Caco-2 (cell line): ENCODE measurements at regions of chr2 and their contacts with region 1.

Region 1: DNA sequence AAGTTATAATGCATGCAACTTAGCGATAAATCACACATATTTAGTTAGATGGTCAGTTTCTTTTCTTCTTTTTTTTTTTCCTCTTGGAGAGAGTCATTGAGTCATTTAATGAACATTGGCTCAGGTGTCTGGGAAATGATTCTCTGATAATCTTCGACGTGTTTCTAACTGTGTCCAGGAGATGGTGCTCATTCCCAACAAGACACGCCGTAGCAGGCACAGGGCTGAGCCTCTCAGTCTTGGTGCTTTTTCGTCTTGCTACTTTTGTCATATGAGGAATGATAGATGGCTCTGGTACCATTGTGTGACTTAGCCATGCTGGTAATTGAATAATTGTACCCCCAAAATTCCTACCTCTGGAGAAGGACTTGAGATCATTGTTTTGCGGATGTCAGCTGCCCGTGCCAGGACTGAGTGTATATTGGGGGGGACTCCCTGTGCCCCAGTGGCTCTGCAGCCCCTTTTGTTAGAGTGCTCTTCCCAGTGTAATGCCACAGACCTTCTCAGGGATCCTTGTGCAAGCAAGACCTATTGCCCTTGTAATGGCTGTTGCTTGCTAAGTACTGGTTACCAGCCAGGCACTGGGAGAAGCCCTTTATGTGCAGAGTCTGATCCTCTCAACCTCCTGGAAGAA is 107.6 kb upstream of the CYRIA start:
- DNase-seq: peak in 1 of 2 experiments; percentile 66
- H3K4me3 ChIP-seq: no peak overlapping the region
- H3K4me3 Mint-ChIP-seq: no peak overlapping the region
- H3K27ac Mint-ChIP-seq: no peak overlapping the region
- H3K4me1 ChIP-seq: no peaks in the 10 kb centered on the region
- H3K4me1 Mint-ChIP-seq: no peaks in the 10 kb centered on the region
- H3K27me3 ChIP-seq: no peaks in the 10 kb centered on the region; the same call in none of the 2 replicates
- H3K27me3 Mint-ChIP-seq: peaks cover 18% of the 10 kb centered on the region
- CTCF ChIP-seq: peak; percentile 64 to 81

Region 2: DNA sequence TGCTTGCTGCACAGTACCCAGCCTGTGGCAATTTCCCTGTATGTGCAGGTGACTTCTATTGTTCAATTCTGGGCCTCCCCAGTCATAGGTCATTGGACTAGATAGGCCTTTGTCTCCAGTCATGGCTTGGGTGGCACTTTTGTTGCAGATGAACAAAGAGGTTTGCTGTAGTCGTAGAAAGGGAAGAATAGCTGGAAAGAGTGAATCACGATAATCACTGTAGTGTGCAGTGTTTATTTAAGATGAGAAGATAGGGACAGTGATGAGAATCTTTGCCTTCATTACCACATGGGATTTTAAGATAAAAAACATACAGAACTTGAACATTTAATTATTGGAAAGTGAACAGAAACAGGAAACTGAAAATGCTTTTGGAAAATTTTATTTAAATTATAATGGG is 48.5 kb after region 1 on chr2:
- CTCF ChIA-PET with region 1: no interaction called
- POLR2A ChIA-PET with region 1: no interaction called
- intact Hi-C with region 1: no loop called
- DNase-seq: no peak
- H3K4me3 ChIP-seq: no peak overlapping the region
- H3K4me3 Mint-ChIP-seq: no peak overlapping the region
- H3K27ac Mint-ChIP-seq: no peak overlapping the region
- H3K4me1 ChIP-seq: peaks cover 11% of the 10 kb centered on the region; the same call in 1 of the 2 replicates
- H3K4me1 Mint-ChIP-seq: peaks cover 12% of the 10 kb centered on the region
- H3K27me3 ChIP-seq: no peaks in the 10 kb centered on the region
- H3K27me3 Mint-ChIP-seq: peaks cover 6% of the 10 kb centered on the region
- CTCF ChIP-seq: no peak

Region 3: GRCh38 chr2:16890081-16890480 is 116.9 kb after region 1 on chr2:
- CTCF ChIA-PET with region 1: interaction called, 5 read pairs
- POLR2A ChIA-PET with region 1: no interaction called
- intact Hi-C with region 1: loop called (anchors 1 kb)
- DNase-seq: peak; percentile 35 to 43
- H3K4me3 ChIP-seq: no peak overlapping the region
- H3K4me3 Mint-ChIP-seq: no peak overlapping the region
- H3K27ac Mint-ChIP-seq: no peak overlapping the region
- H3K4me1 ChIP-seq: no peaks in the 10 kb centered on the region
- H3K4me1 Mint-ChIP-seq: no peaks in the 10 kb centered on the region
- H3K27me3 ChIP-seq: no peaks in the 10 kb centered on the region
- H3K27me3 Mint-ChIP-seq: peaks cover 7% of the 10 kb centered on the region
- CTCF ChIP-seq: peak in 1 of 2 experiments; percentile 43

Region 4: GRCh38 chr2:16900405-16901025 is 127.3 kb after region 1 on chr2:
- CTCF ChIA-PET with region 1: interaction called, 3 read pairs
- POLR2A ChIA-PET with region 1: no interaction called
- intact Hi-C with region 1: loop called (anchors 1 kb)
- DNase-seq: peak; percentile 49 to 59
- H3K4me3 ChIP-seq: no peak overlapping the region
- H3K4me3 Mint-ChIP-seq: no peak overlapping the region
- H3K27ac Mint-ChIP-seq: no peak overlapping the region
- H3K4me1 ChIP-seq: no peaks in the 10 kb centered on the region
- H3K4me1 Mint-ChIP-seq: peaks cover 6% of the 10 kb centered on the region
- H3K27me3 ChIP-seq: no peaks in the 10 kb centered on the region
- H3K27me3 Mint-ChIP-seq: no peaks in the 10 kb centered on the region
- CTCF ChIP-seq: peak; percentile 87 to 98

Region 5: GRCh38 chr2:17148407-17149145 is 375.4 kb after region 1 on chr2:
- CTCF ChIA-PET with region 1: no interaction called
- POLR2A ChIA-PET with region 1: no interaction called
- intact Hi-C with region 1: loop called (anchors 1 kb)
- DNase-seq: peak; percentile 36 to 37
- H3K4me3 ChIP-seq: no peak overlapping the region
- H3K4me3 Mint-ChIP-seq: no peak overlapping the region
- H3K27ac Mint-ChIP-seq: no peak overlapping the region
- H3K4me1 ChIP-seq: no peaks in the 10 kb centered on the region
- H3K4me1 Mint-ChIP-seq: no peaks in the 10 kb centered on the region
- H3K27me3 ChIP-seq: no peaks in the 10 kb centered on the region
- H3K27me3 Mint-ChIP-seq: peaks cover 6% of the 10 kb centered on the region
- CTCF ChIP-seq: peak; percentile 43 to 56

Region 6: DNA sequence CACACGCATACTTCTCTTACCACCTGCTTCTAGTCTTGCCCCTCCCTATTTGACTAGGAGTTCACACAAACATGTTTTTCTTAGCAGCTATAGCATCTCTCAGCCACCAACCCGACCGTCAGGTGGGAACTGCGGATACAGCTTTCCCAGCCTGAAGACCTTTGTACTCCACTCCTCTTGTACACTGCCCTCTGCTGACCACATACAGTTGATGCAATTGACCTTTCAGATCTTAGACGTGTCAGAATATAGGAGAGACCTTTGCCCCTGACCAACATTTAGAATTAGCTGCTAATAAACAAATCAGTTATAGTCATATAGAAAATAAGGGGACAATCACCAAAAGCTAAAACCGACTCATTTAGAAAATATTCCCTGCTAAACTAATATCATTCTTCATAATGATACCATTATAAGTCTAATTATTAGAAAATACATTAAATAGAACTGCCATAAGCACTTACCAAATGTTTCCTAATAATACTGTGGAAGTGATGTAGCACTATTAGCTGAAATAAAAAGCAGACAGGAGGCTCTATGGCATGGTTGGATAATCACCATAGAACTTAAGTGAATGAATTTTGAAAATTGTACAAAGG is 536.6 kb after region 1 on chr2:
- CTCF ChIA-PET with region 1: interaction called, 11 read pairs
- POLR2A ChIA-PET with region 1: no interaction called
- intact Hi-C with region 1: loop called (anchors 1 kb)
- DNase-seq: peak; percentile 77 to 78
- H3K4me3 ChIP-seq: no peak overlapping the region
- H3K4me3 Mint-ChIP-seq: no peak overlapping the region
- H3K27ac Mint-ChIP-seq: no peak overlapping the region
- H3K4me1 ChIP-seq: no peaks in the 10 kb centered on the region
- H3K4me1 Mint-ChIP-seq: no peaks in the 10 kb centered on the region
- H3K27me3 ChIP-seq: no peaks in the 10 kb centered on the region
- H3K27me3 Mint-ChIP-seq: peaks cover 10% of the 10 kb centered on the region
- CTCF ChIP-seq: peak; percentile 79 to 82

Region 7: GRCh38 chr2:17672583-17673317 is 899.6 kb after region 1 on chr2:
- CTCF ChIA-PET with region 1: no interaction called
- POLR2A ChIA-PET with region 1: no interaction called
- intact Hi-C with region 1: loop called (anchors 1 kb)
- DNase-seq: no peak
- H3K4me3 ChIP-seq: no peak overlapping the region
- H3K4me3 Mint-ChIP-seq: no peak overlapping the region
- H3K27ac Mint-ChIP-seq: no peak overlapping the region
- H3K4me1 ChIP-seq: no peaks in the 10 kb centered on the region
- H3K4me1 Mint-ChIP-seq: no peaks in the 10 kb centered on the region
- H3K27me3 ChIP-seq: no peaks in the 10 kb centered on the region
- H3K27me3 Mint-ChIP-seq: no peaks in the 10 kb centered on the region
- CTCF ChIP-seq: no peak